ENCODE measurements at regions of chr12 and their contacts with region 1.

Region 1: GRCh38 chr12:94689002-94689645 is 38.8 kb upstream of the TMCC3 start:
- DNase-seq: no peak
- ATAC-seq: no peak
- H3K4me3 Mint-ChIP-seq: no peak overlapping the region
- H3K27ac Mint-ChIP-seq: no peak overlapping the region
- H3K4me1 Mint-ChIP-seq: peaks cover 11% of the 10 kb centered on the region
- H3K27me3 Mint-ChIP-seq: no peaks in the 10 kb centered on the region
- CTCF ChIP-seq: no peak

Region 2: GRCh38 chr12:94057262-94058151 is 631.6 kb before region 1 on chr12:
- CTCF ChIA-PET with region 1: no interaction called
- POLR2A ChIA-PET with region 1: interaction called, 11 read pairs
- intact Hi-C with region 1: no loop called
- DNase-seq: no peak
- ATAC-seq: no peak
- H3K4me3 Mint-ChIP-seq: no peak overlapping the region
- H3K27ac Mint-ChIP-seq: no peak overlapping the region
- H3K4me1 Mint-ChIP-seq: no peaks in the 10 kb centered on the region
- H3K27me3 Mint-ChIP-seq: peaks cover 1% of the 10 kb centered on the region
- CTCF ChIP-seq: no peak

Region 3: DNA sequence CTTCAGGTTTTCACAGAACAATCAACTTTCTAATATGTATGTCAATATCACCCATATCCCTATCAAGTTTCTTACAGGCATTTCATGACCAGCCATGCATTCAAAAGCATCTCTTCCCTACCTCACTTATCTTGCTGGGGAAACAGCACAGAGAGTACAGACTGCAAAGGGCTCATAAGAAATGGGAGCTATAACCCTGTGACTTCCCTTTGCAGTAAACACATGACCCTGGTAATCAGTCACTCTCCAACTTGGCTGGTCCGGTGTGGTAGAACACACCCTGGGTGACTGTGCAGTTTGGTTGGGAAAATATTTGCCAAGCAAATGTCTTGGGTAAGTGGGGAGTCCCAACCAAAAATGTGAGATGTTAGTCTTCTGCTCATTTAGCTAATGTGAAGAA is 10.7 kb after region 1 on chr12:
- CTCF ChIA-PET with region 1: no interaction called
- POLR2A ChIA-PET with region 1: no interaction called
- intact Hi-C with region 1: no loop called
- DNase-seq: no peak
- ATAC-seq: peak; percentile 67
- H3K4me3 Mint-ChIP-seq: no peak overlapping the region
- H3K27ac Mint-ChIP-seq: peak overlapping the region; percentile 42
- H3K4me1 Mint-ChIP-seq: peaks cover 47% of the 10 kb centered on the region
- H3K27me3 Mint-ChIP-seq: no peaks in the 10 kb centered on the region
- CTCF ChIP-seq: no peak

Region 4: DNA sequence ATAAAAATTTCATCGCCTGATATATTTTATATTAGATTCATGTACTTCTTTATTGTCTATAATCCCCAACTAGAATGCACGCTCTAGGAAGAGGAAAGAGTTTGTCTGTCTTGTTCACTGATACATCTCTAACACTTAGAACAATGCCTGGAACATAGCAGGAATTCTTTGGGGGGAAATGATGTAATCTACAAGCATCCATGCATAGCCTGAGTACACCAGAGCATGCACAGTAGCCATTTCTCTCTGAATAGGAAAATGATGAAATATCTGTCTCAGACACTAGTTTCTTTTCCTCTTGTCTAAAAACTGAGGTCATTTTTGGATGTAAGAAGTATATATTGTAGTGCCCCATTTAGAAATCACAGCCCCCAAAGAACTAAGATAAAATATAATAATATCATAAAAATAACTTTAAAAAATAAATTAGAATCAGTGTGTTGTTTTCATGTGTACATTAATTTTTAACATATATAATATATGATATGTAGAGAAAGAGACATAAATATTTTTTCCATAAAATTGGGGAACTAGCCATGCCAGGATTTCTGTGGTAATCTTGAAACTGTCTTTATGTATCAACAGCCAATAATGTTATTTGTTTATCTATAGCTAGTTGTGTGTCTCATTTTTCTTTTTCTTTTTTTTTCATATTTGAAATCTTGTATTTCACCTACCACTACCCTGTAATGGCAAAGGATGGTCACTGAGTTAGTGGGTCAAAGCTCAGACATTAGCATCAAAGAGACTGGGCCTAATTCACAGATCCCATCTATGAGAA is 116.8 kb after region 1 on chr12:
- CTCF ChIA-PET with region 1: no interaction called
- POLR2A ChIA-PET with region 1: no interaction called
- intact Hi-C with region 1: no loop called
- DNase-seq: no peak
- ATAC-seq: peak; percentile 92
- H3K4me3 Mint-ChIP-seq: peak overlapping the region; percentile 21
- H3K27ac Mint-ChIP-seq: peak overlapping the region; percentile 77
- H3K4me1 Mint-ChIP-seq: peaks cover 57% of the 10 kb centered on the region
- H3K27me3 Mint-ChIP-seq: no peaks in the 10 kb centered on the region
- CTCF ChIP-seq: no peak

Region 5: GRCh38 chr12:94957006-94957405 is 267.9 kb after region 1 on chr12:
- CTCF ChIA-PET with region 1: no interaction called
- POLR2A ChIA-PET with region 1: interaction called, 11 read pairs
- intact Hi-C with region 1: no loop called
- DNase-seq: no peak
- ATAC-seq: no peak
- H3K4me3 Mint-ChIP-seq: no peak overlapping the region
- H3K27ac Mint-ChIP-seq: no peak overlapping the region
- H3K4me1 Mint-ChIP-seq: no peaks in the 10 kb centered on the region
- H3K27me3 Mint-ChIP-seq: peaks cover 2% of the 10 kb centered on the region
- CTCF ChIP-seq: no peak

Measured in activated B cell treated with CpG ODN at 0.5 μM for 24 hours (primary cell).